SK-N-SH (cell line): ENCODE measurements at regions of chr2 and their contacts with region 1.

Region 1: DNA sequence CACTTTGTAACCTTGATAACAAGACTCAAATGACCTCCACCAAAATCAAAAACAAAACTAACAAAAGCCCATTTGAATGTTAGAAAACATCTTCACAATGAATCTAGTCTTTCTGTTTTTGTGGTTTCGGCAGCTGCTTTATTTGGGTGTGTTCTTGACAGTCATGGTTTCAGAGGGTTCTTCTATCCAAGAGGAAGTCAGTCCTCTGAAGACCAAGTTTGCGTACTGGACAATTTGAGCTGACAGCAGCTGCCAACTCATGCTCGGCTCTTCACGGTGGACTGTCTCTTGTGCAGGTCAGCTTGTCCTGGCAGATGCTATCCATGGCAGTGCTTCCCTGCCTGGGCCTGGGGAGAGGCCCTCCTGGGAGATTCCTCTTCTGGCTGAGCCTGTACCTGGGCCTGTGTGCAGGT is 91.0 kb downstream of the TMEM17 start:
- DNase-seq: no peak
- H3K4me3 ChIP-seq: no peak overlapping the region
- H3K27ac ChIP-seq: no peak overlapping the region
- H3K4me1 ChIP-seq: peaks cover 0 to 10% of the 10 kb centered on the region in 2 experiments; a peak in 1 of 4 replicates
- H3K27me3 ChIP-seq: no peaks in the 10 kb centered on the region
- CTCF ChIP-seq: no peak
- EP300 ChIP-seq: no peak
- RAD21 ChIP-seq: no peak

Region 2: GRCh38 chr2:61911510-61911909 is 503.5 kb before region 1 on chr2:
- CTCF ChIA-PET with region 1: interaction called, 12 read pairs
- POLR2A ChIA-PET with region 1: no interaction called
- DNase-seq: no peak
- H3K4me3 ChIP-seq: no peak overlapping the region
- H3K27ac ChIP-seq: no peak overlapping the region
- H3K4me1 ChIP-seq: 0 out of 4 replicates have a peak, but pooled peaks cover 0 to 3% of the 10 kb centered on the region in 2 experiments
- H3K27me3 ChIP-seq: no peaks in the 10 kb centered on the region
- CTCF ChIP-seq: peak; percentile 19; the same call in 1 of the 2 replicates
- EP300 ChIP-seq: no peak
- RAD21 ChIP-seq: peak; percentile 43; the same call in 1 of the 2 replicates

Region 3: GRCh38 chr2:61993444-61994024 is 421.5 kb before region 1 on chr2:
- CTCF ChIA-PET with region 1: interaction called, 143 read pairs
- POLR2A ChIA-PET with region 1: no interaction called
- DNase-seq: peak; percentile 57
- H3K4me3 ChIP-seq: no peak overlapping the region; a peak in 1 of 4 replicates
- H3K27ac ChIP-seq: no peak overlapping the region
- H3K4me1 ChIP-seq: peaks cover 0 to 2% of the 10 kb centered on the region in 2 experiments; a peak in 1 of 4 replicates
- H3K27me3 ChIP-seq: no peaks in the 10 kb centered on the region
- CTCF ChIP-seq: peak; percentile 87
- EP300 ChIP-seq: no peak
- RAD21 ChIP-seq: peak; percentile 95

Region 4: GRCh38 chr2:62000538-62000937 is 414.5 kb before region 1 on chr2:
- CTCF ChIA-PET with region 1: interaction called, 143 read pairs
- POLR2A ChIA-PET with region 1: no interaction called
- DNase-seq: no peak
- H3K4me3 ChIP-seq: no peak overlapping the region
- H3K27ac ChIP-seq: peak overlapping the region in 1 of 2 experiments; percentile 64; a peak in 2 of 4 replicates
- H3K4me1 ChIP-seq: peaks cover 0 to 6% of the 10 kb centered on the region in 2 experiments; a peak in 1 of 4 replicates
- H3K27me3 ChIP-seq: no peaks in the 10 kb centered on the region
- CTCF ChIP-seq: no peak
- EP300 ChIP-seq: no peak
- RAD21 ChIP-seq: peak; percentile 48

Region 5: GRCh38 chr2:62309465-62310091 is 105.4 kb before region 1 on chr2:
- CTCF ChIA-PET with region 1: interaction called, 10 read pairs
- POLR2A ChIA-PET with region 1: no interaction called
- DNase-seq: peak; percentile 78
- H3K4me3 ChIP-seq: no peak overlapping the region
- H3K27ac ChIP-seq: peak overlapping the region in 1 of 2 experiments; percentile 93; a peak in 2 of 4 replicates
- H3K4me1 ChIP-seq: peaks cover 7 to 51% of the 10 kb centered on the region in 2 experiments; a peak in 3 of 4 replicates
- H3K27me3 ChIP-seq: no peaks in the 10 kb centered on the region
- CTCF ChIP-seq: no peak
- EP300 ChIP-seq: no peak; a peak in 1 of 4 replicates
- RAD21 ChIP-seq: no peak

Region 6: GRCh38 chr2:62402156-62402555 is 12.9 kb before region 1 on chr2:
- CTCF ChIA-PET with region 1: interaction called, 11 read pairs
- POLR2A ChIA-PET with region 1: no interaction called
- DNase-seq: no peak
- H3K4me3 ChIP-seq: no peak overlapping the region
- H3K27ac ChIP-seq: no peak overlapping the region
- H3K4me1 ChIP-seq: no peaks in the 10 kb centered on the region; a peak in 1 of 4 replicates
- H3K27me3 ChIP-seq: no peaks in the 10 kb centered on the region
- CTCF ChIP-seq: no peak
- EP300 ChIP-seq: no peak
- RAD21 ChIP-seq: no peak